Activated T-helper 1 cell treated with anti-CD3 and anti-CD28 coated beads, Interleukin-12 subunit alpha, Interleukin-12 subunit beta, Interleukin-2, Interleukin-4 antibody, amounts not matched to agents 30 ng/mL and 10 ng/mL and 1 ng/mL, durations not matched to agents 14 hours and 24 hours and 36 hours (primary cell): ENCODE measurements at regions of chr11 and their contacts with region 1.

Region 1: DNA sequence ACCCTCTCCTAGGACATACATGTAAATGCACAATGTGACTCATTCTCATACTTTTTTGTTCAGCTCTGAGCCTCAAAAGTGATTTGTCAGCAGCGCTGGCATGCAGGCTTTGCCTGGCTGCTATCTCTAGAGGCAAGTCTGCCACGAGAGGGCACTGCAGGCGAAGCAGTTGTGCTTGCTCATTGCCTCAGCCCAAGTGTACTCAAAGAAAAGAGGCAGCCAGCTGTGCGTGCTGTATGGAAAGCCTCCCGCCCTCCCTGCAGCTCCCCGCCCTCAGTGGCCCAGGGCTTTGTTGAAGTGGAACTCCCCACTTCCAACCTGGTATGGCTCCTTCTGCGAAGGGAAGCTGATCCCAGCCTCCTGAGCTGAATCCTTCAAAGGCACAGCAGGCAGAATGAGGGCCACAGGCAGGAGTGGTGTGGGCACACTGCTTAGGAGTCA is 16.3 kb downstream of the SDHAF2 start:
- DNase-seq: peak; percentile 71
- H3K4me3 Mint-ChIP-seq: no peak overlapping the region
- H3K27ac Mint-ChIP-seq: no peak overlapping the region
- H3K4me1 Mint-ChIP-seq: peaks cover 34% of the 10 kb centered on the region
- H3K27me3 Mint-ChIP-seq: no peaks in the 10 kb centered on the region

Region 2: DNA sequence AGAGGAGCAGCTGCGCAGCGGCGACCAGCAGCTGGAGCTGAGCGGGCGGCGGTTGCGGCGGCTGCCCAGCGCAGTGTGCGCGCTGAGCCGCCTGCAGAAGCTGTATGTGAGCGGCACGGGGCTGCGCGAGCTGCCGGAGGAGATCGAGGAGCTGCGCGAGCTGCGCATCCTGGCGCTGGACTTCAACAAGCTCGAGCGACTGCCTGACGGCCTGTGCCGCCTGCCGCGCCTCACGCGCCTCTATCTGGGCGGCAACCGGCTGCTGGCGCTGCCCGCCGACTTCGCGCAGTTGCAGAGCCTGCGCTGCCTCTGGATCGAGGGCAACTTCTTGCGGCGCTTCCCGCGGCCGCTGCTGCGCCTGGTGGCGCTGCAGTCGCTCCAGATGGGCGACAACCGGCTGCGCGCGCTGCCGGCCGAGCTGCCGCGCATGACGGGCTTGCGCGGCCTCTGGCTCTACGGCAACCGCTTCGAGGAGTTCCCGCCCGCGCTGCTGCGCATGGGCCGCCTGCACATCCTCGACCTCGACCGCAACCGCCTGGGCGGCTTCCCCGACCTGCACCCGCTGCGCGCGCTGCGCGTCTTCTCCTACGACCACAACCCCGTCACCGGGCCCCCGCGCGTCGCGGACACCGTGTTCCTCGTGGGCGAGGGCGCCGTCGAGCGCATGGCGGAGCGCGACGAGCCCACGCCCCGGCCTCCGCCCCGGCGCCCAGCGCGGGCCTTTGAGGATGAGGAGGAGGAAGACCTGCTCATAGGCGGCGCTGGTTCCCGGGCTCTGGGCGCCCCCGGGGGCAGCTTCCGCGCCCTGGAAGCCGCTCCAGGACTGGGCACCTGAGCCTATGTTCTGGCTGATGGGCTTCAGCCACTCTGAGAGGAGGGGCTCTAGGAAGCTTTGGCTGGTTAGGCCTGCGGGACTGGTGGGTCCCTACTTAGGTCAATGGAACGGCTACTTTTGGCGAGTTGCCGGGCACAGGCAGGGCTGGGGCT is 63.1 kb after region 1 on chr11:
- intact Hi-C with region 1: loop called (anchors 2 kb)
- DNase-seq: peak; percentile 70
- H3K4me3 Mint-ChIP-seq: peak overlapping the region; percentile 19
- H3K27ac Mint-ChIP-seq: no peak overlapping the region
- H3K4me1 Mint-ChIP-seq: peaks cover 6% of the 10 kb centered on the region
- H3K27me3 Mint-ChIP-seq: peaks cover 41% of the 10 kb centered on the region

Region 3: DNA sequence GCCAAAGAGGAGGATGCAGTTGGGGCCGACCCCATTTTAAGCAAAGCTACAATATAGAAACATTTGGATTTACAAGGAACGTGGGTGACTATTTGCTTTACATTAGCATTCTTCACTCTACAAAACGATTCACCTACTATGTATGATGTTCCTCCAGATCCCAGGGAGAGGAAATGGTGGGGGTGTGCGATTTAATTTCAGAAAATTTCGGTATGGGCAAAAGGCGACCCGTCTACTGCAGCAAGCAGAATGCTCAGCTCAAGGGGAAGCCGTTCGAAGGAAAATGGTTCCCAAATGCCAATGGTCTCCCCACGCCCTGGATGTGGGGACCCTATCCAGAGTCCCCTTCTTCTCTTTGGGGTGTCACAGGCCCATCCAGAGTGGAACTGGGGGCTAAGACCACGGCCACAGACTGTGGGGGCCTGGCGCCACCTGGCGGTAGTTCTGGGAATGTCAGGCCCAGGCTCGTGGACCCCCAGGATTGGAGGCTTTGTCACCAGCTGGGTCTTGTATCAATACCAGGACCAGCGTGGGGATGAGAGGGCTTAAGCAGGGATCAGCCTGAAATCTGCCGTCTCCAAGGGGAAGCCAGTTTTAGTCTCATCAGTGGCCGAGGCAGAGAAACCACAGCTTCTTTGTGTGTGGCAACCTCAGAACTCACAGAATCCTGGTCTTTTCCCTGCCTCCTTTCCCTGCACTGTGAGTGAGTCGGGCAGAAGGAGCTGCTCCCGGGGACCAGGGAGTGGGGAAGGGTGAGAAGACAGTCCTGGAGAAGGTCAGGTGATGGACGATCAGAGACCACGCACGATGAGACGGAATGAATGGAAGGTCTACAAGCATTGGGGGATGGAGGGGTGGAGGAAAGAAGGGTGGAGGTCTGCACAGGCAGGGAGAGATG is 70.7 kb after region 1 on chr11:
- intact Hi-C with region 1: loop called (anchors 1 kb)
- DNase-seq: peak; percentile 32
- H3K4me3 Mint-ChIP-seq: no peak overlapping the region
- H3K27ac Mint-ChIP-seq: no peak overlapping the region
- H3K4me1 Mint-ChIP-seq: no peaks in the 10 kb centered on the region
- H3K27me3 Mint-ChIP-seq: peaks cover 7% of the 10 kb centered on the region

Region 4: GRCh38 chr11:61639816-61640443 is 193.7 kb after region 1 on chr11:
- intact Hi-C with region 1: loop called (anchors 1 kb)
- DNase-seq: no peak
- H3K4me3 Mint-ChIP-seq: no peak overlapping the region
- H3K27ac Mint-ChIP-seq: no peak overlapping the region
- H3K4me1 Mint-ChIP-seq: no peaks in the 10 kb centered on the region
- H3K27me3 Mint-ChIP-seq: peaks cover 2% of the 10 kb centered on the region